ENCODE measurements at regions of chr16 and their contacts with region 1.

Region 1: GRCh38 chr16:58212824-58213655 is 15.1 kb upstream of the CSNK2A2 start:
- H3K4me3 ChIP-seq: no peak overlapping the region
- H3K27ac ChIP-seq: no peak overlapping the region
- H3K4me1 ChIP-seq: no peaks in the 10 kb centered on the region
- CTCF ChIP-seq: no peak

Region 2: DNA sequence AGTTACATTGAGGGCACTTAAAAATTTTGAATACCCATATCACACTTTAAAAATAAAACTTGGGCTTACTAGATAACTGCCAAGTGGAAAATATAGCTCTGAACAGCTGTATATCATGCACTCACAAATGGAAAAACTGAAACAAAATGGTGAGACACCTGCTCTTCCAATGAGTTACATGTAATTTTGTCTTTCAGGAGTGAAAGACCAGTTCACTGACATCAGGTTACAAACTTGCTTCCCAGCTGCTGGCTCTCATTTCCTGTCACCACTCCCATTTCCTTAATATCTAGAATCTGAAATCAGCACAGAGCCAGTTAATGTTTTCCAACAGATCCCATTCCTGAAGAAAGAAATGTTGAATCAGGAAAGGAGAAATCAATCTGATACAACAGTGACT is 25.9 kb before region 1 on chr16:
- CTCF ChIA-PET with region 1: interaction called, 10 read pairs
- POLR2A ChIA-PET with region 1: no interaction called
- H3K4me3 ChIP-seq: no peak overlapping the region
- H3K27ac ChIP-seq: no peak overlapping the region
- H3K4me1 ChIP-seq: no peaks in the 10 kb centered on the region
- CTCF ChIP-seq: no peak